ENCODE measurements at regions of chr12 and their contacts with region 1.

Region 1: GRCh38 chr12:6873094-6874014 is at the start of gene SPSB2:
- DNase-seq: peak; percentile 96

Region 2: GRCh38 chr12:6813363-6813762 is 60.0 kb before region 1 on chr12:
- CTCF ChIA-PET with region 1: no interaction called
- POLR2A ChIA-PET with region 1: no interaction called
- DNase-seq: no peak

Region 3: DNA sequence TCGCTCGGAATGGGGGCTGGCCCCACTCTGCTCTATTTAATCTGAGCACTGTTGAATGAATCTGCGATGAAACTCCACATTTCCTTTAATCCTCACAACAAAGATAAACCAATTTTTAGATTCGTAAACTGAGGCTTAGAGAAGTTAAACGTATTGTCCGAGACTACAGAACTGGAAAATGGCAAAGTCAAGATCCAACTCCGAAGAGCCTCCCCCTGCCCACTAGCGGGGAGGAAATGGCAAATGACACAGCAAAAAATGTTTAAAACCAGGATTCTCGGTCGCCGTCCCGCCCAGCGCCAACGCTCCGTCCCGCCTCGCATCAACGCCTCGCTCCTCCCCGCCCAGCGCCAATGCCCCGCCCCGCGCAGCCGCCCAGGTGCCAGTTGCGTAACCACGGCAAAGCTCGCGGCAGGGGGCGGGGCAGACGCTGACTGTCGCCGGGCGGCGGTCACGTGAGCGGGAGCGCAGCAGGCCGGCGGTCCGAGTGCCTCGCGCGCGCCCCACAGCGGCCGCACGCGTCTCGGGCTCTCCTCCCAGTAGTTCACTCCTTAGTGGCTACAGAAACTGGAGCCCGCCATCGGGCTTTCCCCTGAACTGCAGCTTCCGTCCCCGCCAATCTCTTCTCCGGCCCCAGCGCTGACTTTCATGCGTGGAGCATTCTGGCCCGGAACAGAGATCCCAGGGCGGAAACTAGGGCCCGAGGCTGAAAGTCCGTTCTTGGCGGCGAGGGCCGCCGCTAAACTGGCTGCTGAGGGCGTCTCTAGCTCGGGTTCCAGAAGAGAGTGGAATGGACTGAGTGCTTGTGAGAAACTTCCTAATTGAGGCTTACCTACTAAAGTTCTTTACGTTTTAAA is 17.7 kb after region 1 on chr12:
- CTCF ChIA-PET with region 1: interaction called, 24 read pairs
- POLR2A ChIA-PET with region 1: interaction called, 55 read pairs
- DNase-seq: peak; percentile 97

Region 4: DNA sequence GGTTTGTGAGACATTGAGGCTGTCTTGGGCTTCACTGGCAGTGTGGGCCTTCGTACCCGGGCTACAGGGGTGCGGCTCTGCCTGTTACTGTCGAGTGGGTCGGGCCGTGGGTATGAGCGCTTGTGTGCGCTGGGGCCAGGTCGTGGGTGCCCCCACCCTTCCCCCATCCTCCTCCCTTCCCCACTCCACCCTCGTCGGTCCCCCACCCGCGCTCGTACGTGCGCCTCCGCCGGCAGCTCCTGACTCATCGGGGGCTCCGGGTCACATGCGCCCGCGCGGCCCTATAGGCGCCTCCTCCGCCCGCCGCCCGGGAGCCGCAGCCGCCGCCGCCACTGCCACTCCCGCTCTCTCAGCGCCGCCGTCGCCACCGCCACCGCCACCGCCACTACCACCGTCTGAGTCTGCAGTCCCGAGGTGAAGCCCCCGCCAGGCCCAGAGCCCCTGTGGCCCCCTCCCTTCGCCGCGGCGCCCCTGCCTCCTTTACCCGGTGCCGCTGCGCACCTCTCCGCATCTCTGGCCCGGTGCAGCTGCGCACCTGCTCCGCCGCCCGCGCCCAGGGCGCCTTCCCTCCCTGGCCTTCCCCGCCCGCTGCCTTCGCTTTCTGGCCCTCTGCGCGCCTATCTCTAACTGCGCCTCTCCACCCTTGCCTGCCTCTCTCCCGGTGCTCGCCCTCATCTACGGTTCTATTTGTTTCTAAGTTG is 41.0 kb after region 1 on chr12 and contains the start of gene ENO2:
- CTCF ChIA-PET with region 1: interaction called, 11 read pairs
- POLR2A ChIA-PET with region 1: interaction called, 12 read pairs
- DNase-seq: no peak

Region 5: GRCh38 chr12:6937481-6938297 is 64.3 kb after region 1 on chr12:
- CTCF ChIA-PET with region 1: interaction called, 7 read pairs
- POLR2A ChIA-PET with region 1: interaction called, 63 read pairs
- DNase-seq: peak; percentile 84

Measured in HEK293T (cell line).